HepG2 (cell line): ENCODE measurements at regions of chr11 and their contacts with region 1.

Region 1: DNA sequence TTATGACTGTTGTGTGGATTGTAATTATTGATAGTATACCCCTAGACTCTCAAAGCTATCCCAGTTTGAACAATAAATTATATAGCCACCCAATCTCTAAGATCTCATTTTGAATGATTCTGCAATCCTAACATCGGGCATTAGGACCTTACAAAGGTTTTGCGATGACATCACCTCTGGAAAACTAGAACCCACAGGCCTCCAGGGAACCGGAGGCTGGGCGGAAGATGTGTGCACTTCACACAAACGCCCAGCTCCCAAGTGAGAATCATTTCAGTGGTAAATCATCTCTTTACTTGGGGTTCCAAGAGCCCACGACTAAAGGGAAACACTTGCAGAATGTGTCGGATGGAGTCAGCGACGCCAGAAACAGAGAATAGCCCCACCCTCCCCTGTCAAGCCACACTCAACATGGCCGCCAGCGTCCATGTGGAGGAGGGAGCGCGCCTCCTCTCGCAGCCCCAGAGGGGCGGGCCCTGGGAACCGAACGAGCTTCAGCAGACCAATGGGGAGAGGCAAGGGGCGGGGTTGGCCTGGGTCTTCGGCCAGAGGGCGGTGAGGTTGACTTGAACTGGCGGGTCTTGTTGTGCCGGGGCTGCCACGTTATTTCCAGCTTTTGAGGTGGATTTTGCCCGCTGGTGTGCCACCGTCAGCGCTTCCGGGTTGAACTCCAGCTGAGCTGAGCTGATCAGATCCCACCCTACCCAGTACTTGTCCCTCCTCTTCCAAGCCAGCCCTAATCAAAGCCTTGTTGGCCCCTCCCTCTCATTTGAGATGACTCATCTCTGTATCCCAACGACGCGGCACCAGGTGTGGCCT is 8.4 kb upstream of the MRPL48 start:
- DNase-seq: peak; percentile 98
- ATAC-seq: peak; percentile 97
- H3K4me3 ChIP-seq: peak overlapping the region; percentile 49 to 71 (median 65)
- H3K27ac ChIP-seq: peak overlapping the region; percentile 93
- H3K4me1 ChIP-seq: peaks cover 43% of the 10 kb centered on the region
- H3K27me3 ChIP-seq: no peaks in the 10 kb centered on the region
- CTCF ChIP-seq: peak; percentile 28; the same call in 1 of the 2 replicates
- EP300 ChIP-seq: peak; percentile 29 to 54; a peak in 1 of 4 replicates
- POLR2A ChIP-seq: peak; percentile 67 to 89; a peak in 3 of 4 replicates
- RAD21 ChIP-seq: peak; percentile 15; the same call in 1 of the 2 replicates

Region 2: GRCh38 chr11:73693899-73694525 is 85.3 kb before region 1 on chr11:
- CTCF ChIA-PET with region 1: no interaction called
- POLR2A ChIA-PET with region 1: no interaction called
- in situ Hi-C with region 1: no loop called
- intact Hi-C with region 1: no loop called
- DNase-seq: no peak
- ATAC-seq: no peak
- H3K4me3 ChIP-seq: no peak overlapping the region
- H3K27ac ChIP-seq: no peak overlapping the region
- H3K4me1 ChIP-seq: no peaks in the 10 kb centered on the region
- H3K27me3 ChIP-seq: no peaks in the 10 kb centered on the region
- CTCF ChIP-seq: no peak
- EP300 ChIP-seq: no peak
- POLR2A ChIP-seq: no peak
- RAD21 ChIP-seq: no peak

Region 3: GRCh38 chr11:73750228-73750627 is 29.1 kb before region 1 on chr11:
- CTCF ChIA-PET with region 1: no interaction called
- POLR2A ChIA-PET with region 1: interaction called, 10 read pairs
- in situ Hi-C with region 1: no loop called
- intact Hi-C with region 1: no loop called
- DNase-seq: peak; percentile 42
- ATAC-seq: no peak
- H3K4me3 ChIP-seq: no peak overlapping the region
- H3K27ac ChIP-seq: peak overlapping the region; percentile 81
- H3K4me1 ChIP-seq: peaks cover 95% of the 10 kb centered on the region
- H3K27me3 ChIP-seq: no peaks in the 10 kb centered on the region
- CTCF ChIP-seq: no peak
- EP300 ChIP-seq: no peak
- POLR2A ChIP-seq: no peak
- RAD21 ChIP-seq: no peak

Region 4: DNA sequence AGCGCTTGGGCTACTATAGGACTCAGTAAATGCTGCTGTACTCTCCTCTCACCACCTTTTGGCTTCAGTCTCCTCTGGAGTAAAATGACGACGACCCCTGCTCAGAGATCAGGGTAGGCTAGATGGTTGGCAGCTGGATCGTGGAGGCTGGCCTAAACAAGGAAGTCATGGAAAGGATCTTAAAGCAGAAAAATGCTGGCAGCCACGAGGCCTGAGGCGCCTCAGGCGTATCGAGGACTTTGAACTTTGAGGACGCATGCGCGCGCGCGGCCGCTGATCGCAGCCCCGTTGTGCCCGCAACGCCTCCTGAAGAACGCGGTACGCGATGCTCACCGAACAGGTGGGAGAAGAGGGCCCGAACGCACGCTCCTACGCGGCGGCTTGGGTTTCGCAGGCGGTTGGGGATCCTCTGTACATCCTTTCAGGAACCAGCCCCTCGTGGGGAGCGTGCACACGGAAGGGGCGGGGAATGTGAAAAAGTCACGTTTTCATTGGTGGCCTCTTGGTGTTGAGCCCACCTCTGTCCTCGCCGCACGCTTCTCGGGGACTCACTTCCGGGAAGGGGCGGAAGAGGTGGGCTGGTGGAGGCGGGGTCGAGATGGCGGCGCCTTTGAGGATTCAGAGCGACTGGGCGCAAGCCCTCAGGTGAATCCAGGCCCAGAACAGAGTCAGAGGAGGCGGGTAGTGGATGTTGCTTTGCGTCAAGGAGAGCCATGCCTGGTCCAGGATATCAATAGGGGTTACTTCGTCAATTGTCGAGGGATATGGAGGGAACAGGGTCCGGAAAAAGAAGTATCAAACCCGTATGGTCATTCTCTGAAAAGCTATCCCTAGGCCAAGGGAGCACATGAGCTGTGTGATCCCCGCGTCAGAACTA is 97.4 kb after region 1 on chr11 and contains the starts of genes COA4 and PAAF1:
- CTCF ChIA-PET with region 1: no interaction called
- POLR2A ChIA-PET with region 1: interaction called, 10 read pairs
- in situ Hi-C with region 1: no loop called
- intact Hi-C with region 1: no loop called
- DNase-seq: peak; percentile 98
- ATAC-seq: peak; percentile 96
- H3K4me3 ChIP-seq: peak within 1 kb of the TSS; percentile 70 to 88 (median 82)
- H3K27ac ChIP-seq: peak within 1 kb of the TSS; percentile 98
- H3K4me1 ChIP-seq: peaks cover 53% of the 10 kb centered on the region
- H3K27me3 ChIP-seq: no peaks in the 10 kb centered on the region; a peak in 1 of 5 replicates
- CTCF ChIP-seq: peak; percentile 9; the same call in 1 of the 2 replicates
- EP300 ChIP-seq: peak in 1 of 2 experiments; percentile 5; a peak in 2 of 4 replicates
- POLR2A ChIP-seq: peak; percentile 92
- RAD21 ChIP-seq: peak; percentile 12; the same call in 1 of the 2 replicates
- total RNA-seq, gene COA4: 107 and 115 TPM in 2 replicates
- total RNA-seq, gene PAAF1: 28.8 and 46.4 TPM in 2 replicates